Activated T-helper 1 cell treated with anti-CD3 and anti-CD28 coated beads, Interleukin-12 subunit alpha, Interleukin-12 subunit beta, Interleukin-2, Interleukin-4 antibody, amounts not matched to agents 30 ng/mL and 10 ng/mL and 1 ng/mL, durations not matched to agents 14 hours and 24 hours and 36 hours (primary cell): ENCODE measurements at regions of chr4 and their contacts with region 1.

Region 1: DNA sequence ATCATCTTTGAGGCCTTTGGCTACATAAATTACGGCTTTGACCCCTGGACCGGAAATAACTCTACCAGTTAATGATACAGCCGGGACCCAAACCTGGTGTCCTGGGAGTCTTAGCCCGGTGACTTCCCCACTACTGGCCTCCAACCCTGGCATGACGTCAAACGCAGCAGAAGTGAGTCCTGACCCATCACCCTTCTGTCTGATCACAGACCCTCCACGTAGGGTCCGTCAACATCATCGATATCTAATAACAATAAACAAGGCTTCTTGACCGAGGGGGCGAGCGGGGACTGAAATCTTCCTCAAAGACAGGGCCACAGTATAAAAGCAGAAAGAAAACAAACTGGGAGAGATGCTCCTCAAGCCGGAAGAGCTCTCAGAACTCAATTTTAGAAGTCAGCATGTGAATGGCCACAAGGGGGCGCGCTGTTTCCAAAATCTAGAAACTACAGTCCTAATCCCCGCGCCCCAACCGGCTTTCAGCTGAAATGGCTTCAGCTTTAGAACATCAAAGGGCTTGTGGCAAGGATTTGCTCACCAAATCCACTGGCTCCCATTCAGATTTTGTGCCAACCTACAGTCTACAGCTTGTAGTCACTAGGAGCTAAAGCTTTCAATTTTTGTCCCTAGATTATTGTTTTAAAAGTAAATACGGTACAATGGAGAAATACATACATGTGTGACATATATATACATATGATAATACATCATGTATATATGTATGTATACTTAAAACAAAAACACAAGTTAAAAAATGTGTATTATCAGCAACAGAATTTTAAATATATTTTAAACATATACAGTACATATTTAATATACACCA is 46.4 kb upstream of the ENPP6 start:
- DNase-seq: peak; percentile 86
- H3K4me3 Mint-ChIP-seq: peak overlapping the region; percentile 1
- H3K27ac Mint-ChIP-seq: peak overlapping the region; percentile 60
- H3K4me1 Mint-ChIP-seq: peaks cover 59% of the 10 kb centered on the region
- H3K27me3 Mint-ChIP-seq: peaks cover 2% of the 10 kb centered on the region

Region 2: DNA sequence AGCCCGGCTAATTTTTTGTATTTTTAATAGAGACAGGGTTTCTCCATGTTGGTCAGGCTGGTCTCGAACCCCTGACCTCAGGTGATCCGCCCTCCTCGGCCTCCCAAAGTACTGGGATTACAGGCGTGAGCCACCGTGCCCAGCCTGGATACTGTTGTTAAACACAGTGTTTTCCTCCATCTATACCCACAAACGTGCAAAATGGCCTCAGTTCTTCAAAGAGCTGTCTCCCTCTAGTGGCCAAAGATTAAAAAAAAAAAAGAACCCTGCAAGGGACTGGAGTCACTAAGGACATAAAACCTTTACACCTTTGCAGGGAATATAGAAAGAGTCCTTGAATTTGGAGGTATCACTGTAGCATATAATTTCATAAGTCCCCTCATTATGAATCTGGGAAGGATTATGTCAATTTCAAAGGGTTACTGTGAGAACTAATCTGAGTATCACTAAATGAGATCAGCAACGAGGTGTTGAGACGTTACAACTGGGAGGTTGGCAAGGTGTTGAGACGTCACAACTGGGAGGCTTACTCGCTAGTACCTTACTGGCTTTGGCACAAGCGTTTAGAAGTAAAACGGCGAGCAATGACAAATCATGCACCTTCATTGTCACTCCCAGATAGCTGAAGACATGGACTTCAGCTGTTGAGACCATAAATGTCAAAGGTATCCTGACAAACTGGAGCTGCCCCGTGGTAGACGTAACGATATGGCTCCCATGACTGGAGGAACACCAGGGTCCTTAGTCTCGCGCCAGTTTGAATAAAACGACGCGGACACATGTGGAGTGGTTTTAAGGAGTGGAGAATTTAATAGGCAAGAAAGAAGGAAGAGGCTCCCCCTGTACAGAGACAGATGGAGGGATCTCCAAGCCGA is 13.1 kb before region 1 on chr4:
- intact Hi-C with region 1: loop called (anchors 1 kb)
- DNase-seq: no peak
- H3K4me3 Mint-ChIP-seq: peak overlapping the region; percentile 27
- H3K27ac Mint-ChIP-seq: peak overlapping the region; percentile 94
- H3K4me1 Mint-ChIP-seq: peaks cover 38% of the 10 kb centered on the region
- H3K27me3 Mint-ChIP-seq: peaks cover 1% of the 10 kb centered on the region

Region 3: GRCh38 chr4:184310171-184310567 is 46.0 kb after region 1 on chr4:
- intact Hi-C with region 1: loop called (anchors 1 kb)
- DNase-seq: no peak
- H3K4me3 Mint-ChIP-seq: peak overlapping the region; percentile 34
- H3K27ac Mint-ChIP-seq: peak overlapping the region; percentile 74
- H3K4me1 Mint-ChIP-seq: peaks cover 65% of the 10 kb centered on the region
- H3K27me3 Mint-ChIP-seq: no peaks in the 10 kb centered on the region

Region 4: GRCh38 chr4:184417802-184418511 is 153.8 kb after region 1 on chr4:
- intact Hi-C with region 1: loop called (anchors 1 kb)
- DNase-seq: peak; percentile 21
- H3K4me3 Mint-ChIP-seq: peak overlapping the region; percentile 78
- H3K27ac Mint-ChIP-seq: peak overlapping the region; percentile 95
- H3K4me1 Mint-ChIP-seq: peaks cover 90% of the 10 kb centered on the region
- H3K27me3 Mint-ChIP-seq: no peaks in the 10 kb centered on the region

Region 5: GRCh38 chr4:184514121-184514988 is 250.2 kb after region 1 on chr4:
- intact Hi-C with region 1: loop called (anchors 1 kb)
- DNase-seq: peak; percentile 56
- H3K4me3 Mint-ChIP-seq: peak overlapping the region; percentile 46
- H3K27ac Mint-ChIP-seq: peak overlapping the region; percentile 93
- H3K4me1 Mint-ChIP-seq: peaks cover 56% of the 10 kb centered on the region
- H3K27me3 Mint-ChIP-seq: no peaks in the 10 kb centered on the region

Region 6: DNA sequence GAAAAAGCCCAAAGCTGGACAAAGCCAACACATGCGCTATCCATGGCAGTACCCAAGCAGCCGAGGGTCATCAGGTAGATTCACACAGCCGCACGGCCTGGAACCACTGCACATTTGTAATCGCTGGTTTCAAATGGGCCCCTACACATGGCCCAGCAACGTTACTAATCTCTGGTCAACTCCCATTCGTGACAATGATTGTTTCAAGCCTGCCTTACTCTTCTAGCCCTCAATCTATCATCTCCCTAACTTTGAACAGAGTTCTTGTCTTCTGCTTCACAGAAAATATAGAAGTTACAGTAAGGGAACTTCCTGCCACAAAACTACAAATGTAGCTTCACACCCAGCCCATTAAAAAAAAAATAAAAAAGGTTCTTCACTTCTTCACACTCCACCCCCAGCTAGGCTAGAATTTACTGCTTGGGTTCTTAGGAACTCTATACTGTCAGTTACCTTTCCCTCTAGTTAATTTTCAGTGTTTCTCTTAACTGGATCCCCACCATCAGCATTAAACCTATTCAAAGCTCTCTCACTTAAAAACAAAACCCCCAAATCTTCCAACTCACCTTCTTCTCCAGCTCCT is 360.9 kb after region 1 on chr4:
- intact Hi-C with region 1: loop called (anchors 1 kb)
- DNase-seq: no peak
- H3K4me3 Mint-ChIP-seq: peak overlapping the region; percentile 49
- H3K27ac Mint-ChIP-seq: peak overlapping the region; percentile 88
- H3K4me1 Mint-ChIP-seq: peaks cover 38% of the 10 kb centered on the region
- H3K27me3 Mint-ChIP-seq: no peaks in the 10 kb centered on the region

Region 7: DNA sequence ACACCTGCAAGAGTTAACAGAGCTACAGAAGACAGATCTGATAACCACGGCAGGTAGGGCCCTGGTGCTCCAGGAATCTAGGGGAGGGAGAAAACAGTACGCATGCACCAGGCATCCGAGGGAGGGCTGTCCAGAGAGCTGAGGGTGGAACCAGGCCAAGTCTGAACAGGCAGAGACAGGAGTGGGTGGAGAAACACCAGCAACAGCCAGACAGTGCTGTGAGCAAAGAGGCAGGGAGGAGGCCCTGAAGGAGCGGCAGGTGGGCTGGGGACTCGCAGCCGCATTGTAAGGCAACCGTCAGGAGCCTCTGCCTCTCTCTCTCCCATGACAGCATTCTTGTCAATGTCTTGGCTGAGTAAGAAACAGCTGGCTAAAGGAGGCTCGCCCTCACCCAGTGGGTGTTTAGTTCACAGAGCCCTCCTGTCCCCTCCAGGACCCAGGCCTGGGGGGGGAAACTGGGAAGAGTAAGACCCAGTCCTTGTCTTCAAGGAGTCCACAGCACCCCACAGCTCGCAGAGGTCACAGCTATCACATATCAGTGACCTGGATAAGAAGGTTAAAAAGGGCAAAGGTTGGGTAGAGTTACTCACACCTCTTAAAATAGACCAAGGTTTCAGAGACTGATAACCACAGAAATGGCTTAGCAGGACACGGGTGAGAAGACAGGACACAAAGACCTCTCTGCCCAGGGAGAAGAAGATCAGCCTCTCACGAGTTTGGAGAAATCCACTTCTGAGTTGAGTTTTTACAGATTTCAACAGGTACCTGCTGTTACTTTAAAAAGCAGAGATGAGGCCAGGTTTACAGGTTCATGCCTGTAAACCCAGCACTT is 551.1 kb after region 1 on chr4:
- intact Hi-C with region 1: loop called (anchors 5 kb)
- DNase-seq: no peak
- H3K4me3 Mint-ChIP-seq: no peak overlapping the region
- H3K27ac Mint-ChIP-seq: peak overlapping the region; percentile 16
- H3K4me1 Mint-ChIP-seq: peaks cover 73% of the 10 kb centered on the region
- H3K27me3 Mint-ChIP-seq: peaks cover 2% of the 10 kb centered on the region